ENCODE measurements at regions of chr6 and their contacts with region 1.

Region 1: GRCh38 chr6:43739642-43740091 is 30.3 kb upstream of the VEGFA start:
- DNase-seq: peak; percentile 62
- H3K4me3 ChIP-seq: no peak overlapping the region
- H3K27ac ChIP-seq: no peak overlapping the region
- H3K4me1 ChIP-seq: peaks cover 0 to 22% of the 10 kb centered on the region in 2 experiments; a peak in 1 of 4 replicates
- H3K27me3 ChIP-seq: no peaks in the 10 kb centered on the region
- CTCF ChIP-seq: no peak
- EP300 ChIP-seq: 0 out of 4 replicates have a peak, but pooled peaks of 1 of the 2 experiments have one; percentile 24
- RAD21 ChIP-seq: no peak

Region 2: GRCh38 chr6:43723737-43724295 is 15.9 kb before region 1 on chr6:
- CTCF ChIA-PET with region 1: interaction called, 12 read pairs
- POLR2A ChIA-PET with region 1: no interaction called
- DNase-seq: peak; percentile 77
- H3K4me3 ChIP-seq: no peak overlapping the region; a peak in 1 of 4 replicates
- H3K27ac ChIP-seq: no peak overlapping the region
- H3K4me1 ChIP-seq: peaks cover 0 to 13% of the 10 kb centered on the region in 2 experiments; a peak in 2 of 4 replicates
- H3K27me3 ChIP-seq: no peaks in the 10 kb centered on the region
- CTCF ChIP-seq: peak; percentile 62
- EP300 ChIP-seq: no peak
- RAD21 ChIP-seq: peak; percentile 83